ENCODE measurements at regions of chr12 and their contacts with region 1.

Region 1: GRCh38 chr12:64633656-64634337 is 23.5 kb downstream of the RASSF3 start:
- DNase-seq: peak; percentile 48
- ATAC-seq: peak; percentile 96
- H3K4me3 ChIP-seq: no peak overlapping the region
- H3K27ac ChIP-seq: peak overlapping the region; percentile 83
- H3K4me1 ChIP-seq: peaks cover 44% of the 10 kb centered on the region
- H3K27me3 ChIP-seq: no peaks in the 10 kb centered on the region
- CTCF ChIP-seq: no peak

Region 2: GRCh38 chr12:63843721-63844390 is 789.9 kb before region 1 on chr12:
- CTCF ChIA-PET with region 1: no interaction called
- POLR2A ChIA-PET with region 1: no interaction called
- in situ Hi-C with region 1: no loop called
- intact Hi-C with region 1: no loop called
- DNase-seq: peak; percentile 67
- ATAC-seq: peak; percentile 93
- H3K4me3 ChIP-seq: peak overlapping the region; percentile 83 to 95
- H3K27ac ChIP-seq: peak overlapping the region; percentile 97
- H3K4me1 ChIP-seq: peaks cover 27% of the 10 kb centered on the region
- H3K27me3 ChIP-seq: no peaks in the 10 kb centered on the region
- CTCF ChIP-seq: peak; percentile 98

Region 3: GRCh38 chr12:64650762-64651161 is 17.0 kb after region 1 on chr12:
- CTCF ChIA-PET with region 1: no interaction called
- POLR2A ChIA-PET with region 1: interaction called, 11 read pairs
- in situ Hi-C with region 1: no loop called
- intact Hi-C with region 1: no loop called
- DNase-seq: peak; percentile 75
- ATAC-seq: peak; percentile 86
- H3K4me3 ChIP-seq: peak overlapping the region in 1 of 2 experiments; percentile 13; a peak in 1 of 4 replicates
- H3K27ac ChIP-seq: peak overlapping the region; percentile 81
- H3K4me1 ChIP-seq: peaks cover 54% of the 10 kb centered on the region
- H3K27me3 ChIP-seq: no peaks in the 10 kb centered on the region
- CTCF ChIP-seq: no peak